ENCODE measurements at regions of chr5 and their contacts with region 1.

Region 1: GRCh38 chr5:50352382-50352781 is 88.7 kb downstream of the EMB start:
- DNase-seq: no peak
- ATAC-seq: no peak
- H3K4me3 ChIP-seq: no peak overlapping the region
- H3K27ac ChIP-seq: no peak overlapping the region
- H3K4me1 ChIP-seq: no peaks in the 10 kb centered on the region
- H3K27me3 ChIP-seq: no peaks in the 10 kb centered on the region
- CTCF ChIP-seq: no peak
- POLR2A ChIP-seq: no peak
- RAD21 ChIP-seq: no peak

Region 2: DNA sequence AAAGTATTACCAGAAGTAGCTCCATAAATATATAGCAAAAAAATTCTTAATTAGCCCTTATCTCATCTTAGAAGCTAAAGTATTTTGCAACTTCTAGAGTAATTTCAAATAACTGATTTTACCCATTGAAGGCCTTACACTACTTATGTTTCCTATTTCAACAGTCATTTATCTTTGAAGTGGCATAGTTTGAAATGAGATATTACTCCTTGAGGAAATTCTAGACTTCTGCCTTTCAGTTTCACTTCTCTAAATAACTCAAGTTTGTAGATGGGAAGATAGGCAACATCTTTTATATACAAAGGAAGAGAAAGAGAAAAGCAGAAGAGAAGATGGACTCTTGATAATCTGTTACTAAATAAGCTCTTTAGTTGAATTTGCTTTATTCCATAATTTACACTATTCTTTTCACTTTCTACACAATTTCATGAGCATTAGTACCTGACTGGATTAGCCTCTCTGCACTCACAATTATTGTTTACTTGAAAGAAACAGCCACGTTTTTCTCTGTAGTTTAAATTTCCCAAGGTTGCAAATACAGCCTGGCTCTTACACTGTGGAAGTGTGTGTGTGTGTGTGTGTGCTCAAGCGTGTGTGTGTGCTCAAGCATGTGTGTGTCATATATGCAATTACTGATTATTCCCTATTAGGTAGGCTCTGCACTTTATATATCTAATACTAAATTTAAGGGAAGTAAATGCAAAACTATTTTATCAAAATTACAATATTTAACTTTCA is 149.3 kb after region 1 on chr5:
- CTCF ChIA-PET with region 1: no interaction called
- POLR2A ChIA-PET with region 1: no interaction called
- RAD21 ChIA-PET with region 1: no interaction called
- intact Hi-C with region 1: loop called (anchors 10 kb)
- DNase-seq: no peak
- ATAC-seq: no peak
- H3K4me3 ChIP-seq: no peak overlapping the region
- H3K27ac ChIP-seq: no peak overlapping the region
- H3K4me1 ChIP-seq: no peaks in the 10 kb centered on the region
- H3K27me3 ChIP-seq: no peaks in the 10 kb centered on the region
- CTCF ChIP-seq: no peak
- POLR2A ChIP-seq: no peak
- RAD21 ChIP-seq: no peak

Region 3: GRCh38 chr5:50583621-50584020 is 231.2 kb after region 1 on chr5:
- CTCF ChIA-PET with region 1: no interaction called
- POLR2A ChIA-PET with region 1: no interaction called
- RAD21 ChIA-PET with region 1: no interaction called
- intact Hi-C with region 1: no loop called
- DNase-seq: no peak
- ATAC-seq: no peak
- H3K4me3 ChIP-seq: no peak overlapping the region
- H3K27ac ChIP-seq: no peak overlapping the region
- H3K4me1 ChIP-seq: no peaks in the 10 kb centered on the region
- H3K27me3 ChIP-seq: no peaks in the 10 kb centered on the region
- CTCF ChIP-seq: peak in 2 of 3 experiments; percentile 6 to 15; a peak in 1 of 6 replicates
- POLR2A ChIP-seq: no peak
- RAD21 ChIP-seq: no peak